ENCODE measurements at regions of chr14 and their contacts with region 1.

Region 1: DNA sequence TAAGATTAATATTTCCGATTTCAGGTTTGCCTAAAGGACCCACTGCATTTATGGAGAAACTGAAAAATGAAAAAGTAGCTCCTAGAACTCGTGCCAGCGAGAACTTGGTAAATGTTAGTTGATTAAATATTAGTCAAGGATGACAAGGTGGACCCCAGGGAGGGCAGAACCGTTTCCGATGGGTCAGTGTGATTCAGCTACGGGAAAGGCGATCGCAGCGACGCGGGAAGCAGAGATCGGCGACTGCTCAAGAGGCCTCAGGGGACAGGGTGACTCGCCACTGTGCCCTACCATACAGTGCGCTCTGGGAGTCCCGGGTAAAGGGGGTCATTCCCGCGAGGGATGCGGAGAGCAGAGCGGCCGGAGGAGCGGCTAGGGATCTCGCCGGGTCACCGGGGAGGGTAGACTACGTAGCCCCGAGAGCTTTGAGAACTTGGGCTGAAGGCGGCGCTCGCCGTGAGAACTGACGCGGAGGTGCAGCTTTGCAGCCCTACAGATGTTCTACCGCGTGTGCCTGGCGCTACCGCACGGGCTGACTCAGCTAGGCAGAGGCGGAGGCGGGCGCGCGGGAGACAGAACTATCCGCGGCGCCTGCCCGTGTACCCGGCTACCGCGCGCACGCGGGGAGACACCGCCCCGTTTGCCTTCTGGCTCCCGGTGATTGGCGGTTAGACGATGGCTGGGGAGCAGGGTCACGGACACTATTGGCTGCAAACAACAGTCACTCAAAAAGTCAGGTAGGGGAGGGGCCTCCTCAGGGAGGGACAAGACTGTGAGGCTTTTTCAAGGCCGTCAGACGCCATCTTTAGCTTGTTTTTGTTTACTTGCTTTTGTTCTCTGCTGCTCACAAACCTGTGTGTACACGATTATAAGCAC is 3.2 kb downstream of the C14orf93 start:
- DNase-seq: peak; percentile 99
- H3K4me3 ChIP-seq: peak overlapping the region; percentile 55
- H3K27ac ChIP-seq: peak overlapping the region; percentile 91
- H3K4me1 ChIP-seq: peaks cover 30% of the 10 kb centered on the region
- H3K27me3 ChIP-seq: no peaks in the 10 kb centered on the region
- CTCF ChIP-seq: 0 out of 2 replicates have a peak, but pooled peaks have one; percentile 32

Region 2: DNA sequence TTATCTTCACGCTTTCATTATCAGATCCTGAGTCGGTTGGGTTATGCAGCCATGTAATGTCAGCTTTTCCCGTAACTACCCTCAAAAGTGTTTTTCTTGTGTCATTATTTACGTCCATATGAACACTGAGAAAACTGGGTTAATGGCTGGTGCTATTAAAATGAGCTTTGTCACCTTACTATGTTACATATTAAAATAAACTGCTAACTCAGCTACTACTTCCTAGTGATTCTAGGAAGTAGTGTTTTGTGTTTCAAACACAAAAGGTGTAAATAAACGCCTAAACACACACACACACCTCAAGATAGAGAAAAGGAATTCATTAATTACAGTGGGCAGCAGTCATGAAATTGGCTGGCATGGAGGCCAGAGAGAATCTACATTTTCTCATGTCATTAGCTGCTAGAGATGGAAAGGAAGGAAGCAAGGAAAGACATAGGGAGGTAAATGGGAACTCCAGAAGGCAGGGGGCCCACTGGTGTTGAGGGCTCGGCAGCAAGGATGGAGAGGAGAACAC is 76.9 kb before region 1 on chr14:
- CTCF ChIA-PET with region 1: no interaction called
- POLR2A ChIA-PET with region 1: no interaction called
- intact Hi-C with region 1: no loop called
- DNase-seq: no peak
- H3K4me3 ChIP-seq: peak overlapping the region; percentile 88
- H3K27ac ChIP-seq: peak overlapping the region; percentile 82
- H3K4me1 ChIP-seq: peaks cover 14% of the 10 kb centered on the region
- H3K27me3 ChIP-seq: no peaks in the 10 kb centered on the region
- CTCF ChIP-seq: no peak

Region 3: GRCh38 chr14:23025151-23025814 is 18.5 kb after region 1 on chr14:
- CTCF ChIA-PET with region 1: interaction called, 6 read pairs
- POLR2A ChIA-PET with region 1: interaction called, 22 read pairs
- intact Hi-C with region 1: no loop called
- DNase-seq: peak; percentile 98
- H3K4me3 ChIP-seq: no peak overlapping the region
- H3K27ac ChIP-seq: peak overlapping the region; percentile 95
- H3K4me1 ChIP-seq: peaks cover 80% of the 10 kb centered on the region
- H3K27me3 ChIP-seq: no peaks in the 10 kb centered on the region
- CTCF ChIP-seq: no peak

Region 4: DNA sequence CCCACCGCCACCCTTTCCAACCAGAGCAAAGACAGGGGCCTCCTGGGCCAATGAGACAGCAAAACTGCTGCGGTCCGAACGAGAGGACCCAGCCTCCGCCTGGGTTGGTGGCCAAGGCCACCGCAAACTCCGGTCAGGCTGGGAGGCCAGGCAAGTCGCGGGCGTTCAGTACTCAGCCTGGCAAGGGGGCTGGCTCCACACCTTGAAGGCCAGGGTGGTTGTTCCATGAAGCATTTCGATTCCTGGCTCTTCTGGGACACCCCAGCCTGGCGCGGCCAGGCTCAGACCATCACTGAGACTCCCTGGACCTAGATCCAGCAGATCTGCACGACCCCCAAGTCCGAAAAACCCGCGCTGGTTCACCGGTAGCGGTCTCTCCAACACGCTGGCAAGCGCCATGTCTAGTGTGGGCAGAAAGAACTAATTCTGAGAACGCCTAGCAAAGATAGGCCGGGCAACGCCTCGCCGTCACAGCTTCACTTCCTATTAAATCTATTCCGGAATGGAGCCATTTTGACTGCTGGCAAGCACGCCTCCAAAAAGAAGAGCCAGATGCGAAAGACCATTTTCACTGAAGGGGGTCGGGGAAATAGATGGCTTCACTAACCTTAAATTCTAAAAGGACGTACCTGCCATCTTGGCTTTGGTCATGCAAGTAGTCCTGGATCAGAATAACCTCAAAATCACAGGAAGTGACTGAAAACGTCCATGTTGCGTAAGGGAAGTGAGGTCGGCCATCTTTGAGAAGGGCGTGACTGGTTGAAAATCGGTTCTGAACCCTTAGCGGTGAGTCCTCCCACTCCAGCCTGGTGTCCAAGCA is 27.9 kb after region 1 on chr14 and contains the start of gene PSMB5:
- CTCF ChIA-PET with region 1: no interaction called
- POLR2A ChIA-PET with region 1: no interaction called
- intact Hi-C with region 1: loop called (anchors 1 kb)
- DNase-seq: peak; percentile 97
- H3K4me3 ChIP-seq: peak within 1 kb of the TSS; percentile 87
- H3K27ac ChIP-seq: peak within 1 kb of the TSS; percentile 98
- H3K4me1 ChIP-seq: peaks cover 20% of the 10 kb centered on the region
- H3K27me3 ChIP-seq: no peaks in the 10 kb centered on the region
- CTCF ChIP-seq: no peak
- total RNA-seq, gene PSMB5: 491 and 500 TPM in 2 replicates